Keratinocyte (primary cell): ENCODE measurements at regions of chr15 and their contacts with region 1.

Region 1: DNA sequence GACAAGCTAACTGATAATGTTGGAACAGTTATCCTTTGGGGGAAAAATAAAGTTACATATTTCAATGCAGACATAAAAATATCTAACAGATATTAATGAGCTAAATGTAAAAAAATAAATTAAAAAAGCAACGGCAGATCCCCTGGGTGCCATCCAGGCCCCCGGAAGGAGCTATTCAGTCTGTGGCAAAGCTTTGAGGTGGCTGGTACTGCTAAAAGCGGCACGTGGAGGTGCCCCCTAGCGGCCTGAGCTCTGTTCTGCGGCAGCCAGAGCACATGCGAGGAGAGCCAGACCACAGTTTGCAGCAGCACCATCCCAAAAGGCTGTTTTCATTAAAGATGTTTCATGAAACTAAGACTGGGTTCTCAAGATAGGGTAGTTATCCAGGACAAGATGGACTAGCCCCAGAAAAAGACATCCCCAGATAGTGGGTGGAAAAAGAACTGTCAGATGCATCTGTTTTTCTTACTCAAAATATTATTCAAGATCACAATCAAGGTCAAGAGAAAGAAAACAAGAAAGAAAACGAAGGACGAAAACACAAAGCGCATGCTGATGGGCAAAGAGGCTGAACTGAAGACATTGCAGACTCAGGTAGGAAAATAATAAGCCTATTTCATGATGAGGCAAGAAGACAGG is 18.7 kb downstream of the AP3S2 start:
- DNase-seq: no peak
- H3K4me3 ChIP-seq: no peak overlapping the region
- H3K27ac ChIP-seq: no peak overlapping the region
- H3K4me1 ChIP-seq: no peaks in the 10 kb centered on the region
- H3K27me3 ChIP-seq: no peaks in the 10 kb centered on the region
- CTCF ChIP-seq: peak; percentile 90 to 98 (median 96)

Region 2: GRCh38 chr15:89750560-89751542 is 124.2 kb before region 1 on chr15 and contains the start of gene MESP1:
- dilution Hi-C with region 1: loop called (anchors 25 kb)
- DNase-seq: no peak
- H3K4me3 ChIP-seq: peak within 1 kb of the TSS; percentile 38 to 73 (median 61)
- H3K27ac ChIP-seq: no peak within 1 kb of the TSS
- H3K4me1 ChIP-seq: peaks cover 4% of the 10 kb centered on the region
- H3K27me3 ChIP-seq: peaks cover 7% of the 10 kb centered on the region
- CTCF ChIP-seq: peak; percentile 54 to 78 (median 64)
- polyA plus RNA-seq, gene MESP1: 0.05 TPM in 1 of 3 replicates, not detected in the others